Testis (tissue), 5 donors: ENCODE measurements at regions of chr9 and their contacts with region 1.

Region 1: GRCh38 chr9:17528859-17529258 is 50.0 kb upstream of the SH3GL2 start:
- DNase-seq: no peak
- H3K4me3 ChIP-seq: no peak overlapping the region
- H3K27ac ChIP-seq: no peak overlapping the region
- H3K4me1 ChIP-seq: no peaks in the 10 kb centered on the region
- H3K27me3 ChIP-seq: no peaks in the 10 kb centered on the region
- CTCF ChIP-seq: peak in 1 of 3 experiments; percentile 14
- POLR2A ChIP-seq: no peak

Region 2: GRCh38 chr9:17802249-17802857 is 273.5 kb after region 1 on chr9:
- intact Hi-C with region 1: loop called (anchors 5 kb)
- DNase-seq: no peak
- H3K4me3 ChIP-seq: no peak overlapping the region
- H3K27ac ChIP-seq: no peak overlapping the region
- H3K4me1 ChIP-seq: no peaks in the 10 kb centered on the region
- H3K27me3 ChIP-seq: no peaks in the 10 kb centered on the region
- CTCF ChIP-seq: peak in 2 of 3 experiments; percentile 45 to 46
- POLR2A ChIP-seq: no peak